Caco-2 (cell line): ENCODE measurements at regions of chr12 and their contacts with region 1.

Region 1: DNA sequence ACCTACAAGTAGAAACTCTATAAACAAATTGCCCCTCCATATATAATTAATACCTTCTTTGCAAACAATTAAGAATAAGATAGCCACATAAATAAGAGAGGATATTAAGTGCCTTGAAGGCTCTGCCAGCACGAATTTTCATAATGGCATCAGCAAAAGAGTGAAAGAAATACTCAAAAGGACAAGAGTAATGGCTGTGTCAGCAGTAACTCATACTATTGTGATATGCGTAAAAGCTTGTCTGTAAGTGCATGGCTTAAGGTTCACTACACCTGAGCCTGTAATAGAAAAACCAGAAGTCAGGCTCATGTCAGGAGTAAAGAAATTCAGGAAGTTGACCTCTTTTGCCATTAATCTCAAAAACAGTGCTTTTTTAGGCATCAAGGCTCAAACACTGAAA is 204.1 kb downstream of the TRHDE start:
- DNase-seq: no peak
- H3K4me3 ChIP-seq: no peak overlapping the region
- H3K4me3 Mint-ChIP-seq: no peak overlapping the region
- H3K27ac Mint-ChIP-seq: no peak overlapping the region
- H3K4me1 ChIP-seq: no peaks in the 10 kb centered on the region
- H3K4me1 Mint-ChIP-seq: no peaks in the 10 kb centered on the region
- H3K27me3 ChIP-seq: no peaks in the 10 kb centered on the region
- H3K27me3 Mint-ChIP-seq: peaks cover 6% of the 10 kb centered on the region
- CTCF ChIP-seq: no peak

Region 2: GRCh38 chr12:72498354-72498753 is 22.1 kb after region 1 on chr12:
- CTCF ChIA-PET with region 1: no interaction called
- POLR2A ChIA-PET with region 1: interaction called, 11 read pairs
- intact Hi-C with region 1: no loop called
- DNase-seq: no peak
- H3K4me3 ChIP-seq: no peak overlapping the region
- H3K4me3 Mint-ChIP-seq: no peak overlapping the region
- H3K27ac Mint-ChIP-seq: no peak overlapping the region
- H3K4me1 ChIP-seq: no peaks in the 10 kb centered on the region
- H3K4me1 Mint-ChIP-seq: no peaks in the 10 kb centered on the region
- H3K27me3 ChIP-seq: no peaks in the 10 kb centered on the region
- H3K27me3 Mint-ChIP-seq: no peaks in the 10 kb centered on the region
- CTCF ChIP-seq: no peak